ENCODE measurements at regions of chrX and their contacts with region 1.

Region 1: DNA sequence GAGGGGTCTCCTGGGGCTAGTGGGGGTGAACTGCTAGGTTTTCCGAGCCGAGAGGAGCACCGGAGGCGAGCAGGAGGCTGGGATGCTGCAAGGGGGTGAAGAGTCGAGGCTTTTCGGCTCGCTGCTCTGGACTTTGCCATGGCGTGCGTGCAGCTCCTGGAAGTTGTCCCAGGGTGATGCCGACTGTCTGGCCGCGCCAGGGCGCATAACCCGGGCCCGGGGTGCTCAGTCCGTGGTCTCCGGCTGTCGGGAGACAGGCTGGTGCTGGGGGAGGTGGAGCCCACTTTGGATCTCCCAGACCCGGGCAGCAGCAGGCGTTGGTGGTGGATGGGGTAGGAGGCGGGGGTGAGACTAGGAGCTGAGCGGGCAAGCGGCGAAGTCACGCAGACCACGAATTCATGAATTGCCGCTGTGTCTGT is 789 bp downstream of the GRIA3 start:
- DNase-seq: no peak
- H3K4me3 ChIP-seq: peak overlapping the region; percentile 60 to 68
- H3K27ac ChIP-seq: peak overlapping the region in 1 of 2 donors; percentile 27
- H3K4me1 ChIP-seq: no peaks in the 10 kb centered on the region
- H3K27me3 ChIP-seq: no peaks in the 10 kb centered on the region
- CTCF ChIP-seq: no peak

Region 2: GRCh38 chrX:123121241-123121640 is 63.6 kb before region 1 on chrX:
- intact Hi-C with region 1: no loop called
- DNase-seq: no peak
- H3K4me3 ChIP-seq: no peak overlapping the region
- H3K27ac ChIP-seq: no peak overlapping the region
- H3K4me1 ChIP-seq: no peaks in the 10 kb centered on the region
- H3K27me3 ChIP-seq: no peaks in the 10 kb centered on the region
- CTCF ChIP-seq: no peak

Region 3: DNA sequence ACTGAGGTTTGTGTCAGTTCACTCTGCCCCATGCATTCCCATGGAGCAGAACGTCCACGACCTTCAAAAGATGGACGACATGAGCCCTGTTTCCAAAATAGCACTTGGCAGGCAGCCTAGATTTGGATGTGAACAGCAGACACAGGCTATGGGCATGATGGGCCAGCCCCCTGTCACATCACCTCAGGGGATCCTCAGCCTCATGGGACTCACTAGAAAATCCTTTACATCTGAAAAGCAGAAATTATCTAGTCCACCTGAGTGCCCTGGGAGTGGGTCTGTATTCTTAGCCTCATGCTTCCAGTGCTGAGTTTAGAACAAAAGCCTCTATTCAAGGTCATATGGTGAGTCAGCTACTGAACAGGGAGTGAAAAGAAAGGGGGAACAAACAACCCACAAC is 35.0 kb after region 1 on chrX:
- intact Hi-C with region 1: loop called (anchors 5 kb)
- DNase-seq: no peak
- H3K4me3 ChIP-seq: no peak overlapping the region
- H3K27ac ChIP-seq: no peak overlapping the region
- H3K4me1 ChIP-seq: peaks cover 0 to 6% of the 10 kb centered on the region in 2 donors
- H3K27me3 ChIP-seq: no peaks in the 10 kb centered on the region
- CTCF ChIP-seq: no peak

Region 4: DNA sequence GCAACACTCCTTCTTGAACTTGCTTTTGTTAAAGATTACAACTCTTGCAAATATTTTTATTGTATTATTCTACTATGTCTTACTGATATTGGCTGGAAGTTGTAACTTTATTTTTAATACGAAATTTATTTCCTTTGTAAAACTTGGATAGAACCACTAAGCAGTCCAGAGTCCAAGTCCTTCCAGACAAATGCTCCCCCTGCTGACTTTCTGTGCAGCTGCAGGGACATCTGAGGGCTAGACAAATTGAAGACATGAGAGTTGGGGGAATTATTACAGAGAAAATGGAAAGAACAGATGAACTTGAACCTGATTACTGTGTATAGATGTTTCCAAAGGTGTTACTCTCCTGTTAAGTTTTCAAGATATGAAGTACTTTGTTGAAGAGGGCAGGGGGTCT is 238.0 kb after region 1 on chrX:
- intact Hi-C with region 1: loop called (anchors 5 kb)
- DNase-seq: no peak
- H3K4me3 ChIP-seq: no peak overlapping the region
- H3K27ac ChIP-seq: no peak overlapping the region
- H3K4me1 ChIP-seq: no peaks in the 10 kb centered on the region
- H3K27me3 ChIP-seq: no peaks in the 10 kb centered on the region
- CTCF ChIP-seq: peak; percentile 22 to 69 (median 44)